ENCODE measurements at regions of chr2 and their contacts with region 1.

Region 1: GRCh38 chr2:72993147-72993932 is 76.0 kb downstream of the EMX1 start:
- DNase-seq: peak; percentile 58
- ATAC-seq: peak; percentile 67
- H3K4me3 ChIP-seq: no peak overlapping the region
- H3K27ac ChIP-seq: peak overlapping the region; percentile 20
- H3K4me1 ChIP-seq: peaks cover 13% of the 10 kb centered on the region
- H3K27me3 ChIP-seq: no peaks in the 10 kb centered on the region
- CTCF ChIP-seq: peak; percentile 89
- EP300 ChIP-seq: no peak
- POLR2A ChIP-seq: no peak
- RAD21 ChIP-seq: peak; percentile 94

Region 2: DNA sequence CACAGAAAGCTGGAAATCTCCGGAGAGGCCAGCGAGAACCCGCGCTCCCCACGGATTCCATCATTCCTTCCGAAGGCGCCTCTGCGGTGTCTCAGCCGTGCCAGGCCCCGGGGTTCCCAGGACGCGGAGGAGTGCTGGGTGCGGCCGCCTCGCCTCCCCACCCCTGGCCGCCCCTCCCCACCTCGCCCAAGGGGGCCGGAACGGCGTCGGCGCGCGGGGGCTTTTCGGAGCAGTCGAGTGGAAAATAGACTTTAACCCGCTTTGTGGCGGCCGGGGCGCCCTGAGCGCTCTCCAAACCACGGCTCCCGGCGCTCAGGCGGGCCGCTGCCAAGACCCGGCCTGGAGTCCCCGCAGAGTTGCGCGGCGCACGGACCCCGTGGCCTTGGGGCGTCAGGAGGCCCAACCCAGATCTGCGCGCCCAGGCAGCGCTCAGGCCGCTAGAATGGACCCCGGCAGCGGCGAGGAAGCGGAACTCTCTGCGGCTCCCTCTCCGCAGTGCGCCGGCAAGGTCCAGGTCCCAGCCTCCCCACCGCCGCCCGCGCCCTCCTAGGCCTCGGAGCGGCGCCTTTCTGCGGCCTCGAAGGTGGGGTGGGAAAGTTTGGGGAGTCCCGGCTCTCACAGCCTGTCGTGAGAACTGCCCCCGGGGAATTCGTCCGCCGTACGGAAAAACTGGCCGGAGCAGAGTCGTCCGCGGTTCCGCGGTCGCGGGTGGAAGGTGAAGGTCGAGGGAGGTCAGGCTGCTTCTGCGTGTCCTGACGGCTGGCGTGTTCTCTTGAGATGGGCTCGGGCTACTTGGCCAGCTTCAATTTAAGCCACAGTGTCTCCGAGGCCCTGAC is 77.2 kb before region 1 on chr2:
- CTCF ChIA-PET with region 1: no interaction called
- POLR2A ChIA-PET with region 1: no interaction called
- in situ Hi-C with region 1: no loop called
- intact Hi-C with region 1: no loop called
- DNase-seq: peak; percentile 60
- ATAC-seq: peak; percentile 80
- H3K4me3 ChIP-seq: peak overlapping the region; percentile 64 to 83 (median 69)
- H3K27ac ChIP-seq: no peak overlapping the region
- H3K4me1 ChIP-seq: peaks cover 41% of the 10 kb centered on the region
- H3K27me3 ChIP-seq: peaks cover 17 to 86% of the 10 kb centered on the region in 2 experiments
- CTCF ChIP-seq: peak; percentile 26; the same call in 1 of the 2 replicates
- EP300 ChIP-seq: 0 out of 4 replicates have a peak, but pooled peaks of 1 of the 2 experiments have one; percentile 36
- POLR2A ChIP-seq: no peak
- RAD21 ChIP-seq: no peak

Region 3: GRCh38 chr2:73020657-73021370 is 27.5 kb after region 1 on chr2:
- CTCF ChIA-PET with region 1: no interaction called
- POLR2A ChIA-PET with region 1: interaction called, 13 read pairs
- in situ Hi-C with region 1: no loop called
- intact Hi-C with region 1: loop called (anchors 1 kb)
- DNase-seq: peak; percentile 97
- ATAC-seq: peak; percentile 91
- H3K4me3 ChIP-seq: peak overlapping the region in 1 of 3 experiments; percentile 29; a peak in 1 of 6 replicates
- H3K27ac ChIP-seq: peak overlapping the region; percentile 71
- H3K4me1 ChIP-seq: peaks cover 35% of the 10 kb centered on the region
- H3K27me3 ChIP-seq: no peaks in the 10 kb centered on the region
- CTCF ChIP-seq: 0 out of 2 replicates have a peak, but pooled peaks have one; percentile 14
- EP300 ChIP-seq: peak in 1 of 2 experiments; percentile 79; a peak in 2 of 4 replicates
- POLR2A ChIP-seq: no peak
- RAD21 ChIP-seq: peak; percentile 51

Region 4: GRCh38 chr2:73071360-73072133 is 78.2 kb after region 1 on chr2 and contains the start of gene SFXN5:
- CTCF ChIA-PET with region 1: interaction called, 4 read pairs
- POLR2A ChIA-PET with region 1: interaction called, 11 read pairs
- in situ Hi-C with region 1: loop called (anchors 5 kb)
- intact Hi-C with region 1: loop called (anchors 1 kb)
- DNase-seq: peak; percentile 95
- ATAC-seq: peak; percentile 89
- H3K4me3 ChIP-seq: peak within 1 kb of the TSS; percentile 81 to 98 (median 95)
- H3K27ac ChIP-seq: peak within 1 kb of the TSS; percentile 89
- H3K4me1 ChIP-seq: peaks cover 53% of the 10 kb centered on the region
- H3K27me3 ChIP-seq: no peaks in the 10 kb centered on the region; a peak in 1 of 5 replicates
- CTCF ChIP-seq: peak; percentile 33; the same call in 1 of the 2 replicates
- EP300 ChIP-seq: 0 out of 4 replicates have a peak, but pooled peaks of 1 of the 2 experiments have one; percentile 6
- POLR2A ChIP-seq: peak; percentile 82 to 90
- RAD21 ChIP-seq: peak; percentile 34; the same call in 1 of the 2 replicates
- total RNA-seq, gene SFXN5: 22.2 and 34.9 TPM in 2 replicates

Region 5: GRCh38 chr2:73156539-73157124 is 163.3 kb after region 1 on chr2:
- CTCF ChIA-PET with region 1: no interaction called
- POLR2A ChIA-PET with region 1: no interaction called
- in situ Hi-C with region 1: loop called (anchors 5 kb)
- intact Hi-C with region 1: no loop called
- DNase-seq: peak; percentile 62
- ATAC-seq: peak; percentile 98
- H3K4me3 ChIP-seq: peak overlapping the region in 1 of 3 experiments; percentile 12; a peak in 1 of 6 replicates
- H3K27ac ChIP-seq: no peak overlapping the region
- H3K4me1 ChIP-seq: peaks cover 10% of the 10 kb centered on the region
- H3K27me3 ChIP-seq: peaks cover 4 to 24% of the 10 kb centered on the region in 2 experiments; a peak in 3 of 5 replicates
- CTCF ChIP-seq: peak; percentile 100
- EP300 ChIP-seq: no peak
- POLR2A ChIP-seq: no peak
- RAD21 ChIP-seq: peak; percentile 98

Region 6: DNA sequence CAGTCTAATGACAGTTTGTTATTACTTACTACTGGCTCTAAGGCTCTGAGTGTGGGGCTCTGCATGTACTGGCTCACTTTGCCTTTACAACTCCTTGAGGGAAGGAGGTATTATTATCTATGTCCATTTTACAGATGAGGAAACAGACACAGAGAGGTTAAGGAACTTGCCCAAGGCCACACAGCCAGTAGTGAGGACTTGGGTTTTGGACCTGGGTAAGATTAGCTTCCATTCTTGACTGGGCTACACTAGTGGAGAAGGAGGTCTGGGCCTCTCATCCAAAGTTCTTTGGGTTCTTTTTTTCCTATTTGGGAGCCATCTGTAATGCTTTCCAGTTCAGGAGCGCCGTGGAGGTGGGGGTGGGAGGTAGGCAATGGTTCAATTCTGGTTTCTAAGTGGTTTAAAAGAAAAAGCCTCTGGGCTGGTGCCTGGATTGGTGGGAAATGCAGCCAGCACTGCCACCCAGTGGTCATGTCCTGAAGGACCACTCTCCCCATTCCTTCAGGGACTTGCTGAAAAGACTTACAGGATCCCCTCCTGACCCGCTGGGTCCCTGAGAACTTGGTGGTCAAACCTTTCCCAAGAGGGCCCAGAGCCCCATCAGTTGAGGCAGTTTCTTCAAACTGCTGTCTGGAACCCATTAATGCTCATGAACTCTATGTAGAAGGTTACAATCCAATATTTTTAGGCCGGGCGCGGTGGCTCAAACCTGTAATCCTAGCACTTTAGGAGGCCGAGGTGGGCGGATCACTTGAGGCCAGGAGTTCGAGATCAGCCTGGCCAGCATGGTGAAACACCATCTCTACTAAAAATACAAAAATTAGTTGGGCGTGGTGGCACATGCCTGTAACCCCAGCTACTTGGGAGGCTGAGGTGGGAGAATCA is 170.4 kb after region 1 on chr2:
- CTCF ChIA-PET with region 1: interaction called, 10 read pairs
- POLR2A ChIA-PET with region 1: no interaction called
- in situ Hi-C with region 1: loop called (anchors 5 kb)
- intact Hi-C with region 1: loop called (anchors 1 kb)
- DNase-seq: peak; percentile 71
- ATAC-seq: peak; percentile 92
- H3K4me3 ChIP-seq: no peak overlapping the region
- H3K27ac ChIP-seq: no peak overlapping the region
- H3K4me1 ChIP-seq: no peaks in the 10 kb centered on the region
- H3K27me3 ChIP-seq: peaks cover 4 to 8% of the 10 kb centered on the region in 2 experiments; a peak in 4 of 5 replicates
- CTCF ChIP-seq: peak; percentile 89
- EP300 ChIP-seq: no peak
- POLR2A ChIP-seq: no peak
- RAD21 ChIP-seq: peak; percentile 90